Activated B cell treated with CpG ODN at 0.5 μM for 24 hours (primary cell): ENCODE measurements at regions of chr16 and their contacts with region 1.

Region 1: DNA sequence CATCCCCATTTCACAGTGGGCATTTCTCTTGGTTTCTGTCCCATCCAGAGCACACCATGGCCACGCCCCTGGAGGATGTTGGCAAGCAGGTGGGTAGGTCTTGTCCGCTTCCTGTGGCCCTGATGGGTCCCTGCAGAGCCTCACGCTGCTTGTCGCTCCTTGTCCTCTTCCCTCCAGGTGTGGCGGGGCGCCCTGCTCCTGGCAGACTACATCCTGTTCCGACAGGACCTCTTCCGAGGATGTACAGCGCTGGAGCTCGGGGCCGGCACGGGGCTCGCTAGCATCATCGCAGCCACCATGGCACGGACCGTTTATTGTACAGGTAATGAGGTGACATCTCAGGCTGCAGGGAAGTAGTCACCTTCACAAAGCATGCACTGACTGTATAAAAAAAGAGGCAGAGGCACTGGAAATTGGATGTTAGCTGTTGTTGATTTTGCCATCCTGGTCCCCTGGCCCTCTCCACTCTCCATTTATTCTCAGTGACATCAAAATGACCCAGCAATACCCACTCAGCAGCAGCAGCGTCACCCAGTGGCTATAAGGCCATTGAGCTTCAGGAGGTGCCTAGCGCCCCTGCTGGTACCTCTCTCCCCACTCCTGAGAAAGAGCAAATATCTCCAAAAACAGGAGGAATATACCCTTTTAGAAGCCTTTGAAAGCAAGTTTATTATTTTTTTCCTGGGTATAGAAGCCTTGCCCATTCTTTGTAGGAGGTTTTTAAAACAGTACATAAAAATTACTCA is 13.7 kb downstream of the METTL22 start:
- DNase-seq: no peak
- ATAC-seq: no peak
- H3K4me3 Mint-ChIP-seq: no peak overlapping the region
- H3K27ac Mint-ChIP-seq: no peak overlapping the region
- H3K4me1 Mint-ChIP-seq: peaks cover 6% of the 10 kb centered on the region
- H3K27me3 Mint-ChIP-seq: no peaks in the 10 kb centered on the region
- CTCF ChIP-seq: no peak

Region 2: GRCh38 chr16:8110572-8111514 is 524.3 kb before region 1 on chr16:
- CTCF ChIA-PET with region 1: no interaction called
- POLR2A ChIA-PET with region 1: no interaction called
- intact Hi-C with region 1: no loop called
- DNase-seq: no peak
- ATAC-seq: no peak
- H3K4me3 Mint-ChIP-seq: no peak overlapping the region
- H3K27ac Mint-ChIP-seq: no peak overlapping the region
- H3K4me1 Mint-ChIP-seq: no peaks in the 10 kb centered on the region
- H3K27me3 Mint-ChIP-seq: no peaks in the 10 kb centered on the region
- CTCF ChIP-seq: no peak

Region 3: GRCh38 chr16:8645831-8646230 is 10.7 kb after region 1 on chr16:
- CTCF ChIA-PET with region 1: no interaction called
- POLR2A ChIA-PET with region 1: interaction called, 10 read pairs
- intact Hi-C with region 1: no loop called
- DNase-seq: no peak
- ATAC-seq: no peak
- H3K4me3 Mint-ChIP-seq: no peak overlapping the region
- H3K27ac Mint-ChIP-seq: no peak overlapping the region
- H3K4me1 Mint-ChIP-seq: peaks cover 10% of the 10 kb centered on the region
- H3K27me3 Mint-ChIP-seq: no peaks in the 10 kb centered on the region
- CTCF ChIP-seq: no peak

Region 4: GRCh38 chr16:8685994-8686621 is 50.9 kb after region 1 on chr16:
- CTCF ChIA-PET with region 1: no interaction called
- POLR2A ChIA-PET with region 1: no interaction called
- intact Hi-C with region 1: no loop called
- DNase-seq: no peak
- ATAC-seq: no peak
- H3K4me3 Mint-ChIP-seq: no peak overlapping the region
- H3K27ac Mint-ChIP-seq: no peak overlapping the region
- H3K4me1 Mint-ChIP-seq: peaks cover 12% of the 10 kb centered on the region
- H3K27me3 Mint-ChIP-seq: no peaks in the 10 kb centered on the region
- CTCF ChIP-seq: no peak